Ovary (tissue), 10 donors: ENCODE measurements at regions of chr14 and their contacts with region 1.

Region 1: DNA sequence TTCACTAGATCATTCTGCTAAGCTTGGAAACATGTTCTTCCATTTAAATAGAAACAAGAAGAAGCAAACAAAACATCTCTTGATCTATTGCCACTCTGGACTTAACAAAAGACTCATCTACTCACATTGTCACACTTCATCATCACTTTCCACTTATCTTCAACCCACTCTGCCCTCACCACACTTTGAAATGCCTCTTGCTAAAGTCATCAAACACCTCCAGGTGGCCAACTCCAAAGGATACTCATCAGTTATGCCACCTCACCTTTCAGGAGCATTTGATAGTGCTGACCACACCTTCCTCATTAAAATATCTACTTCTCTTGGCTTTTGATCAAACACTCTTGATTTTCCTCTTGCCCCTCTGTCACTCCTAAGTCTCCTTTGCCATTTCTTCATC is 7.2 kb downstream of the EFCAB11 start:
- DNase-seq: no peak
- H3K4me3 ChIP-seq: no peak overlapping the region
- H3K27ac ChIP-seq: no peak overlapping the region
- H3K4me1 ChIP-seq: no peaks in the 10 kb centered on the region
- H3K27me3 ChIP-seq: no peaks in the 10 kb centered on the region
- CTCF ChIP-seq: no peak
- EP300 ChIP-seq: no peak
- POLR2A ChIP-seq: no peak

Region 2: DNA sequence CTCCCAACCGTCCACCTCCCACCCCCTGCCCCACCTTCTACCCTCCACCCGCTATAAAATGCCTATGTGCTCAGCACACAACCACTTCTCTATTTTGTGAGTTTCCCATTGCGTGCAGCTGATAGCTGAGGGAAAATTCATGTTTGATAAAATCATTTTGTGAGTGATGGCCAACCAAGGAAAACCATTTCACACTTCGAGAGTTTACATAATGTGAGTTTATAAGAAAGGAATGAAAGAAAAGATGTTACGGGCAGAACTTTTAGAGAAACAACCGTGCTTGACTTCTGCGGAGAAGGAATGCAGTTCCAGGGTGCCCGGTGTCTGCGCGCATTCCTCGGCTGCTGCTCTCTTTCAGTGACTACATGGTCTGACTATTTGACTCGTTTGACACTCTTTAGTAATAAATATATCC is 133.7 kb before region 1 on chr14:
- intact Hi-C with region 1: no loop called
- DNase-seq: no peak
- H3K4me3 ChIP-seq: no peak overlapping the region
- H3K27ac ChIP-seq: no peak overlapping the region
- H3K4me1 ChIP-seq: no peaks in the 10 kb centered on the region
- H3K27me3 ChIP-seq: no peaks in the 10 kb centered on the region
- CTCF ChIP-seq: no peak
- EP300 ChIP-seq: no peak
- POLR2A ChIP-seq: no peak

Region 3: DNA sequence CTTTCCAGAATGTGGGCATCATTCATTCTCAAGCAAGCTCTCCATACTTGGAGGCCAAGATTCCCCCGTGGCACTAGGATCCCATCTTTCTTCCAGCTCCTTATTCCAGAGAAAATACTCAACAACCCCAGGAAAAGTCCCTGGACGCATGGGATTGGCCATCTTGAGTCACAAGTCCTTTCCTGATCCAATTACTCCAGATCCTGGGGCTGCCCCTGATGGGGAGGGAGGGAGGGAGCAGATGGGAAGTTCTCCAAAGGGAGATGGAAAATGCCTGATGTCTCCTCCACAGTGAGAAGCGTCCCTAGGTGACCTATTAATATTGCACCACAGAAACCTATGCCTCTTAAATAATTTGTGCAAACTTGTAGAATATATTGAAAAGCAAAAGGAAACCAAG is 102.0 kb after region 1 on chr14:
- intact Hi-C with region 1: no loop called
- DNase-seq: no peak
- H3K4me3 ChIP-seq: no peak overlapping the region
- H3K27ac ChIP-seq: no peak overlapping the region
- H3K4me1 ChIP-seq: no peaks in the 10 kb centered on the region
- H3K27me3 ChIP-seq: no peaks in the 10 kb centered on the region
- CTCF ChIP-seq: no peak
- EP300 ChIP-seq: no peak
- POLR2A ChIP-seq: no peak

Region 4: DNA sequence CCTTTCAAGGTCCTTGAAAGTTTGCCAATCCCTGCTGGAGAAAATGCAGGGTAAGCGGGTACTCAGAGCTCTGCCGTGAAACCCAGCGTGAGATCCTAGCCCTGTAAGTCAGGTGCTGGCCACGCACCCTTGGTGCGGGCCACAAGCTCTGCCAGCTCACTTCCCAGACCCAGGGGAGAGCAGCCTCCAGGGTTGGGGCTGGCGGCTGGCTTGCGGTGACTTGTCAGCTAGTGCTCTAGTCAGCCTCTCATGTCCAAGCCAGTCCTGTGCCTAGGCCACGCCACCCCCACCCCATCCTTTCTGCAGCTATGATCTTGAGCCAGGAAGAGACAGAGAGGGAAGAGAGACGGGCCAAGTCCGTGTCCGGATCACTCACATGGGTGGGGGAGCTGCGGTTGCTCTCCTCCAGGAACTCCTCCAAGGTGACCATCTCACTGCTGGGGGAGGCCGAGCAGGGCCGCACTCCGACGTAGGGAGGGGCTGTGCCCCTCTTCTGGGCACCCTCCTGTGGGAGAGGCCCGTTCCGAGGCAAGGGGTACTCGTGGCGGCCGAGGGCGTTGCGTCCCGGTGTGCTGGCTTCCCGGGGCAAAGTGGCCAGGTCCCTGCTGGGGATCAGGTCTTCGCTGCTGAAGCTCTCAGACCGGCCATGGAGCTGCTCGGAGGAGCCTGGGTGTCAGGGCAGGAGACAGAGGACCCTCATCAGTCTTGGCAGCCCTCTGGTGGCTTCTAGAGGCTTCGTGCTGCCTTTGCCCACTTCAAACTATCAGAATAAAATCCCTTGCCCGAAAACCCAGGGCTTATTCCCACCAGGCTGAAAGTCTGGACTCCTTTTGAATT is 1330.4 kb after region 1 on chr14:
- intact Hi-C with region 1: loop called in 1 of 4 experiments (anchors 10 kb)
- DNase-seq: no peak
- H3K4me3 ChIP-seq: no peak overlapping the region
- H3K27ac ChIP-seq: no peak overlapping the region
- H3K4me1 ChIP-seq: peaks cover 2% of the 10 kb centered on the region
- H3K27me3 ChIP-seq: no peaks in the 10 kb centered on the region
- CTCF ChIP-seq: no peak
- EP300 ChIP-seq: no peak
- POLR2A ChIP-seq: no peak